OCI-LY7 (cell line): ENCODE measurements at regions of chr1 and their contacts with region 1.

Region 1: GRCh38 chr1:159040206-159040605 is 30.5 kb downstream of the IFI16 start:
- DNase-seq: no peak
- H3K4me3 ChIP-seq: no peak overlapping the region
- H3K27ac ChIP-seq: no peak overlapping the region
- H3K4me1 ChIP-seq: no peaks in the 10 kb centered on the region
- CTCF ChIP-seq: no peak

Region 2: GRCh38 chr1:159015440-159015909 is 24.7 kb before region 1 on chr1:
- CTCF ChIA-PET with region 1: no interaction called
- POLR2A ChIA-PET with region 1: interaction called, 3 read pairs
- intact Hi-C with region 1: loop called (anchors 2 kb)
- DNase-seq: peak; percentile 91
- H3K4me3 ChIP-seq: peak overlapping the region; percentile 88
- H3K27ac ChIP-seq: peak overlapping the region; percentile 89
- H3K4me1 ChIP-seq: peaks cover 56% of the 10 kb centered on the region
- CTCF ChIP-seq: no peak

Region 3: DNA sequence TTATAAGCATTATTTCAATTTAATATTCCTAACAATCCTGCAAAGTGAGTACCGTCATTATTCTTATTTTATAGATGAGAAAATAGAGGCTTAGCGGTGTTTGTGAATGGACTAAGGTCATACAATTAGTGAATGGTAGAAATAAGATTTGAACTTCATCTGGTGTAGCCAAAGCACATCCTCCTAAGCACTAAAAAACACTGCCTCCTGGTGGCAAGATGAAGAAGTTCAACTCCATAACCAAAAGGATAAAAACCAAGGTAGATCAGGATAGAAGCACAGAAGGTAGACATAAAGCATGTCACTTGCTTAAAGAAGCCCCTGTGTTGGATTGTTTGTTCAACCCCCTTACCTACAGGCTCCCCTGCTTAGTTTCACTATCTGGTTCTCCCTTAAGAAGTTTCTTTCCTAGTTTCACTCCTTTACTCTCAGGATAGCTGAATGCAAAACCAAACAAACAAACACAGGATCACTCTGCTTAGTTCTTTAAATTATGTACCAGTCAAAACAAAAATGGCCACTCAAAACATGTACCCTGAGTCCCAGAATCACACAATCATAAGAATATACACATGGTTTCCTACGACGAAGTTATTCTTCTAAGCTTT is 49.1 kb after region 1 on chr1:
- CTCF ChIA-PET with region 1: no interaction called
- POLR2A ChIA-PET with region 1: no interaction called
- intact Hi-C with region 1: no loop called
- DNase-seq: peak; percentile 60
- H3K4me3 ChIP-seq: no peak overlapping the region
- H3K27ac ChIP-seq: no peak overlapping the region
- H3K4me1 ChIP-seq: peaks cover 10% of the 10 kb centered on the region
- CTCF ChIP-seq: peak; percentile 93

Region 4: DNA sequence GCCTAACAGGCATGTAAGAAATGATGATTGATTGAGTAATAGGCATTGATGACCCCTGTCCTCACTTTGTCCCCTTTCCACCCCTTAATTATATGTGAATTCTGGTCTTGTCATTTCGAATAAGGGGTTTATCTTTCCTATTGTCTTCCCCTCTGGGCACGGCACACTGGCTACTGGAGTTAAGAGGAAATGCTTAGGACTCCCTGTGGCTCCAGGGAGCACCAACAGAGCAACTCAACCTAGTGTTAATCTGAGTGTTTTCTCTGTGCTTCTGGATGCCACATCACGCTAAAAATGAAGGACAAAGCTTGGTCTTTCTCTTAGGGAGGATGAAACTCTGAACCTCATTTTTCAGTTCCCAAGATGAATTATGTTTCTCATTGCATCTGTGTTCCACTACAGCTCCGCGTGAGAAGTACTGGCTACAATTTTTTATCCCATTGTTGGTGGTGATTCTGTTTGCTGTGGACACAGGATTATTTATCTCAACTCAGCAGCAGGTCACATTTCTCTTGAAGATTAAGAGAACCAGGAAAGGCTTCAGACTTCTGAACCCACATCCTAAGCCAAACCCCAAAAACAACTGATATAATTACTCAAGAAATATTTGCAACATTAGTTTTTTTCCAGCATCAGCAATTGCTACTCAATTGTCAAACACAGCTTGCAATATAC is 267.3 kb after region 1 on chr1:
- CTCF ChIA-PET with region 1: no interaction called
- POLR2A ChIA-PET with region 1: no interaction called
- intact Hi-C with region 1: no loop called
- DNase-seq: no peak
- H3K4me3 ChIP-seq: no peak overlapping the region
- H3K27ac ChIP-seq: no peak overlapping the region
- H3K4me1 ChIP-seq: no peaks in the 10 kb centered on the region
- CTCF ChIP-seq: no peak